GM10248 (cell line): ENCODE measurements at regions of chr16 and their contacts with region 1.

Region 1: DNA sequence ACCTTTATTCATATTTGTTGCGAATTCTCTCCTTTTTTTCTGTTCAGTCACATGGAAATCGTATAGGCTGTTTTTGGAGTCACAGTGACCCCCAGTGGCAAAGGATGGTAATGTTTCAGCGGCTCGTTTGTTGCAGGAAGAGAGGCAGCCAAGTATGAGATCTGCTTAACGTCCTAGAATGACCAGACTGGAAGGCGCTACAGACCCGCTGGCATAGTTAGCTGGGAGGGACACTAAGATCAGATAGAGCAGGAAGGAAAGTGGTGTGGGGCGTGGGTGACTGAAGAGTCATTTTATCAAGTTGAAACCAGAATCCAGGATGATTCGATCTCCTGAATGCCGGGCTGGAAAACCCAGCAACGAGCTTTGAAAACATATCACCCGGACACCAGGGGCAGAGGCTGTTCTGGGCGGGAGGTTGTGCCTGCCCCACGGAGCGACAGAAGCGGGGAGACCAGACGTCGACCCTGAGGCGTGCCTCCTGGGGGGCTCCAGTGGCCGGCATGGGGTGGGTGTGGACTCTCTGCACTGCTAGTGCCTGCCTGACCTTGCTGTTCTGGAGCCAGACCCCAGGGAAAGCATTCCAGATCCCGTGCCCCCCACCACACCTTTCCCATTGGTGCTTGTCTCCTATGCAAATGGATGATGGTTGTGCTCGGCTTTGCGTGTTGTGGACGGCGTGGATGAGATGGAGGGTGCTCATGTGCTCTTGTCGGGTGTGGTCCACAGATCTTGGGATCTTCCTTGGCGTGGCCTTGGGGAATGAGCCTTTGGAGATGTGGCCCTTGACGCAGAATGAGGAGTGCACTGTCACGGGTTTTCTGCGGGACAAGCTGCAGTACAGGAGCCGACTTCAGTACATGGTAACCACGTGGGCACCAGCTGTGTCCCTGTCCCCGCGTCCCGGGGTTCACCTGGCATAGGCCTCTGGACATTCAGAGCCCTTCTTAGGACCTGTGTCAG is 7.7 kb downstream of the IL34 start:
- DNase-seq: peak; percentile 79
- CTCF ChIP-seq: peak; percentile 84

Region 2: GRCh38 chr16:70331588-70332358 is 322.3 kb before region 1 on chr16:
- CTCF ChIA-PET with region 1: interaction called, 32 read pairs
- POLR2A ChIA-PET with region 1: no interaction called
- DNase-seq: no peak
- CTCF ChIP-seq: peak; percentile 41

Region 3: DNA sequence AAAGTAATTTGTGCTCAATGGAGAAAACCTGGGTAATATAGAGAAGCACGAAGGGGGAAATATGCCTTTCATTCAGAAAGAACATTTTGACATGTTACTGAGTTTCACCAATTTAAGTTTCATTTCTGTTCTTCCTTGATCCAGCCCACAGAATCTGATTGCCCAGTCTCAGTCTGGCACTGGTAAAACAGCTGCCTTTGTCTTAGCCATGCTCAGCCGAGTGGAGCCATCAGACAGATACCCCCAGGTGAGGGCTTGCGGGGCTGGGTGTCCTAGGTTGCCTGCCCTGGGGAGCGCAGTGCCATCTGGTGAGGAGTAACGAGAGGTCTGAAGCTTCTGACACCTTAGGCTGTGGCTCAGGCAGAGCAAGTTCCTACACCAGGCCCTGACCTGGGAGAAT is 289.7 kb before region 1 on chr16:
- CTCF ChIA-PET with region 1: interaction called, 19 read pairs
- POLR2A ChIA-PET with region 1: no interaction called
- DNase-seq: no peak
- CTCF ChIP-seq: no peak

Region 4: GRCh38 chr16:70395345-70395901 is 258.7 kb before region 1 on chr16:
- CTCF ChIA-PET with region 1: interaction called, 13 read pairs
- POLR2A ChIA-PET with region 1: no interaction called
- DNase-seq: peak; percentile 84
- CTCF ChIP-seq: peak; percentile 86

Region 5: DNA sequence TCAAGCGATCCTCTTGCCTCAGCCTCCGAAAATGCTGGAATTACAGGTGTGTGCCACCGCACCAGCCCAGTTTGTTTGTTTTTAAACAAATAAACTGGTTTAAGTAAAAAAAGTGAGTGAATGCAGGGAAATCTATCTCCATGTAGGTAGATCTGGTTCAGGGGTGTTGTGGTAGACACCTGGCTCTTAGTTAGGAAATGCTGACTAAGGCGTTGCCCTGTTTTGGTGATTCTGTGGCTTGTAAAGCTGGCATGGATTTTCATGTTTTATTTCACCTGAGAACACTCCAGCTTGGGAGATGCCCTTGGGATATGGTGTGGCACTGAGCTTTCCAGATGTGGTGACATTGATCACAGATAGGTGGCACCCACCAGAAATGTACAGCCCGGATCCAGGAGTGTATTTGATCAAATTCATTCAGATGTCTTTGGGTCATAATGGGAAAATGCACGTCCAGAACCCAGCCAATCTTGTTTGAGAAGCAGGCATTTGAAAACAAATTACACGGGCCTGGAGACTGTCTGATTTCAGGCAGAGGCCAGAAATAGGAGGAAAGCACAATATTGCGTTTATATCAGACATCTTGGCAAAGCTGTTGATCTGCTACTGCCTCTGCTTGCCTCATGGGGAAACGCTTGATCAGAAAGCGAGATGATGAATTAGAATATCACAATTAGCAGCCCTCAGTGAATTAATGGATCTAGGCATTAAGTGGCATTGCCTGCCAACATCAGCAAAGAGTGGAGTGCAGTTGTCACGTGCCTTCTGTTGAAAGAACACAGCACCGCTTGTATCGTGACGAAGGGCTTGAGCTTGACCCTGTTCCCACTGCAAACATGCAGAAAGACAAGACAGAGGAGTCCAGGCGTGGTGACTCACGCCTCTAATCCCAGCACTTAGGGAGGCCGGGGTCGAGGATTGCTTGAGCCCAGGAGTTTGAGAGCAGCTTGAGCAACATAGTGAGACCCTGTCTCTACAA is 15.0 kb before region 1 on chr16:
- CTCF ChIA-PET with region 1: interaction called, 12 read pairs
- POLR2A ChIA-PET with region 1: no interaction called
- DNase-seq: no peak
- CTCF ChIP-seq: no peak

Region 6: DNA sequence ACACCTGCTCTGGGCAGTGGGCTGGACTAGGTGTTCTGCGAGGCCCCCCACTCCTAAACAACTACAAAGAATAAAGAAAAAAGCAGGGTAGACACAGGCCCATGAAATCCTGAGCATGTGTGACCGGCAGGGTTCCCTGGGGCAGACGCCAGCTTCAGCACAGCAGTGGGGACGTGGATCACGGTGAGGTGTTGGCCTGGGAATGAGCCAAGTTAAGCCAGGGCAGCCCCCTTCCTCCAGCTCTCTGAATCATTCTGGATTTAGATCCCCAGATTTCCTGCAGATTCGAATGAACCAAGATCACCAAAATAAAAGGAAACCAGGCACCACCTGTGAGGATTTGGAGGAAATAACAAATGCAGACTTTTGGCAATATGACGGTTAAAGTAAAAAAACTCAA is 12.2 kb after region 1 on chr16:
- CTCF ChIA-PET with region 1: interaction called, 18 read pairs
- POLR2A ChIA-PET with region 1: no interaction called
- DNase-seq: no peak
- CTCF ChIP-seq: no peak

Region 7: GRCh38 chr16:70703041-70703834 is 49.1 kb after region 1 on chr16:
- CTCF ChIA-PET with region 1: no interaction called
- POLR2A ChIA-PET with region 1: no interaction called
- DNase-seq: no peak
- CTCF ChIP-seq: no peak

Region 8: GRCh38 chr16:70764632-70765031 is 110.5 kb after region 1 on chr16:
- CTCF ChIA-PET with region 1: no interaction called
- POLR2A ChIA-PET with region 1: no interaction called
- DNase-seq: no peak
- CTCF ChIP-seq: no peak